Caco-2 (cell line): ENCODE measurements at regions of chr6 and their contacts with region 1.

Region 1: GRCh38 chr6:2988426-2989331 is 11.0 kb upstream of the NQO2 start:
- DNase-seq: peak; percentile 92 to 94
- H3K4me3 ChIP-seq: peak overlapping the region; percentile 79
- H3K4me3 Mint-ChIP-seq: peak overlapping the region; percentile 76
- H3K27ac Mint-ChIP-seq: peak overlapping the region; percentile 97
- H3K4me1 ChIP-seq: peaks cover 6% of the 10 kb centered on the region; the same call in 1 of the 2 replicates
- H3K4me1 Mint-ChIP-seq: peaks cover 12% of the 10 kb centered on the region
- H3K27me3 ChIP-seq: no peaks in the 10 kb centered on the region
- H3K27me3 Mint-ChIP-seq: no peaks in the 10 kb centered on the region
- CTCF ChIP-seq: peak; percentile 79 to 86

Region 2: DNA sequence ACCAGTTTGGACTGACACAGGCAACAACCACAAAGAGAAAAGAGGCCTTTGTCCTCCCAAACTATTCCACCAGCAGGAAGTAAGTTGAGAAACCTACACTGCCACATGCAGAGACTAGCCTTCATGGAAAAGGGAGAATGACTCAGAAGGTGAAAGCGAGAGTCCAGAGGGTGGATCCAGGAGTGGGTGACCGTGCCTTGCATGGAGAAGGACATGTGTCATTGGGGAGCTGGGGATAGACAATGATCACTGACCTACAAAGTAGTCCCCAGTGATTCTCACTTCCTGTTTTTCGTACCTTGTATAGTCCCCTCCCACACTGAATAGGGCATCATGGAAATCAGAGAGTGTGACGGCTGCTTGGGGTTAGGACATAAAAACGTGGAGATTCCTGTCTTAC is 329.9 kb before region 1 on chr6:
- CTCF ChIA-PET with region 1: no interaction called
- POLR2A ChIA-PET with region 1: no interaction called
- intact Hi-C with region 1: no loop called
- DNase-seq: no peak
- H3K4me3 ChIP-seq: no peak overlapping the region
- H3K4me3 Mint-ChIP-seq: no peak overlapping the region
- H3K27ac Mint-ChIP-seq: no peak overlapping the region
- H3K4me1 ChIP-seq: no peaks in the 10 kb centered on the region
- H3K4me1 Mint-ChIP-seq: peaks cover 7% of the 10 kb centered on the region
- H3K27me3 ChIP-seq: no peaks in the 10 kb centered on the region
- H3K27me3 Mint-ChIP-seq: no peaks in the 10 kb centered on the region
- CTCF ChIP-seq: no peak

Region 3: GRCh38 chr6:2848851-2849250 is 139.8 kb before region 1 on chr6:
- CTCF ChIA-PET with region 1: interaction called, 13 read pairs
- POLR2A ChIA-PET with region 1: interaction called, 4 read pairs
- intact Hi-C with region 1: loop called (anchors 1 kb)
- DNase-seq: no peak
- H3K4me3 ChIP-seq: no peak overlapping the region
- H3K4me3 Mint-ChIP-seq: no peak overlapping the region
- H3K27ac Mint-ChIP-seq: no peak overlapping the region
- H3K4me1 ChIP-seq: peaks cover 27% of the 10 kb centered on the region
- H3K4me1 Mint-ChIP-seq: peaks cover 16% of the 10 kb centered on the region
- H3K27me3 ChIP-seq: no peaks in the 10 kb centered on the region
- H3K27me3 Mint-ChIP-seq: no peaks in the 10 kb centered on the region
- CTCF ChIP-seq: no peak

Region 4: GRCh38 chr6:2942914-2943571 is 45.6 kb before region 1 on chr6:
- CTCF ChIA-PET with region 1: interaction called, 11 read pairs
- POLR2A ChIA-PET with region 1: interaction called, 4 read pairs
- intact Hi-C with region 1: loop called (anchors 1 kb)
- DNase-seq: peak; percentile 67 to 75
- H3K4me3 ChIP-seq: peak overlapping the region; percentile 15; the same call in 1 of the 2 replicates
- H3K4me3 Mint-ChIP-seq: peak overlapping the region; percentile 73
- H3K27ac Mint-ChIP-seq: peak overlapping the region; percentile 93
- H3K4me1 ChIP-seq: peaks cover 41% of the 10 kb centered on the region
- H3K4me1 Mint-ChIP-seq: peaks cover 30% of the 10 kb centered on the region
- H3K27me3 ChIP-seq: no peaks in the 10 kb centered on the region
- H3K27me3 Mint-ChIP-seq: no peaks in the 10 kb centered on the region
- CTCF ChIP-seq: no peak

Region 5: DNA sequence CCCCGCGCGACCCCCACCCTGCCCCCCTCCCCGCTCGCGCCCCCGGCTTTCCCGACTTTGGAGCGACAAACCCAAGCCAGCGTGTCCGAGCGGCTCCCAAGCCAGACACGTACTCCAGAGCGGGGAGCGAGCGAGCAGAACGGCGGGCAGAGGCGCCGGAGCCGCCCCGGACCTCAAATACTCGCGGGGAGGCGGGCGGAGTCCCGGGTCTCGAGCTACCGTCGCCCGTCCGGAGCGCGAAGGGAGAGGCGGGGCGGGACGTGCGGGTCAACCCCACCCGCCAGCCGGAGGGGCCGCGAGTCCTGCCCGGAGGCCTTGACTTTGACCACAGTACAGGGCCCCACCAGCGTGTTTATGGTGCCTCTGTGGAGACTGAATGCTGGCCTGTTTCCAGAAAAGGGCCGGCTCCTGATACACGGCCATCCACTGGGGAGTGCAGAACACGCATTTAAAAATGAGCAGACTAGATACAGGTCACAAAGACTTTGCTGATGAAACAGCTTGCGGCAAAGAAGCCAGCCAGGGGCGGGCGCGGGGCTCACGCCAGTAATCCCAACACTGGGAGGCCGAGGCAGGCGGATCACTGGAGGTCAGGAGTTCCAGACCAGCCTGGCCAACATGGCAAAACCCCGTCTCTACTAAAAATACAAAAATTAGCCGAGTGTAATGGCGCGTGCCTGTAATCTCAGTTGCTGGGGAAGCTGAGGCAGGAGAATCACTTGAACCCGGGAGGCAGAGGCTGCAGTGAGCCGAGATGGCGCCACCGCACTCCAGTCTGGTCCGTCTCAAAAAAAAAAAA is 17.1 kb before region 1 on chr6 and contains the start of gene SERPINB6:
- CTCF ChIA-PET with region 1: interaction called, 4 read pairs
- POLR2A ChIA-PET with region 1: interaction called, 10 read pairs
- intact Hi-C with region 1: loop called (anchors 2 kb)
- DNase-seq: peak; percentile 57 to 70
- H3K4me3 ChIP-seq: peak within 1 kb of the TSS; percentile 79
- H3K4me3 Mint-ChIP-seq: peak within 1 kb of the TSS; percentile 79
- H3K27ac Mint-ChIP-seq: peak within 1 kb of the TSS; percentile 82
- H3K4me1 ChIP-seq: peaks cover 8% of the 10 kb centered on the region; the same call in 1 of the 2 replicates
- H3K4me1 Mint-ChIP-seq: no peaks in the 10 kb centered on the region
- H3K27me3 ChIP-seq: no peaks in the 10 kb centered on the region
- H3K27me3 Mint-ChIP-seq: no peaks in the 10 kb centered on the region
- CTCF ChIP-seq: no peak
- total RNA-seq, gene SERPINB6: 57.0 and 60.0 TPM in 2 replicates